SK-N-SH (cell line): ENCODE measurements at regions of chr1 and their contacts with region 1.

Region 1: DNA sequence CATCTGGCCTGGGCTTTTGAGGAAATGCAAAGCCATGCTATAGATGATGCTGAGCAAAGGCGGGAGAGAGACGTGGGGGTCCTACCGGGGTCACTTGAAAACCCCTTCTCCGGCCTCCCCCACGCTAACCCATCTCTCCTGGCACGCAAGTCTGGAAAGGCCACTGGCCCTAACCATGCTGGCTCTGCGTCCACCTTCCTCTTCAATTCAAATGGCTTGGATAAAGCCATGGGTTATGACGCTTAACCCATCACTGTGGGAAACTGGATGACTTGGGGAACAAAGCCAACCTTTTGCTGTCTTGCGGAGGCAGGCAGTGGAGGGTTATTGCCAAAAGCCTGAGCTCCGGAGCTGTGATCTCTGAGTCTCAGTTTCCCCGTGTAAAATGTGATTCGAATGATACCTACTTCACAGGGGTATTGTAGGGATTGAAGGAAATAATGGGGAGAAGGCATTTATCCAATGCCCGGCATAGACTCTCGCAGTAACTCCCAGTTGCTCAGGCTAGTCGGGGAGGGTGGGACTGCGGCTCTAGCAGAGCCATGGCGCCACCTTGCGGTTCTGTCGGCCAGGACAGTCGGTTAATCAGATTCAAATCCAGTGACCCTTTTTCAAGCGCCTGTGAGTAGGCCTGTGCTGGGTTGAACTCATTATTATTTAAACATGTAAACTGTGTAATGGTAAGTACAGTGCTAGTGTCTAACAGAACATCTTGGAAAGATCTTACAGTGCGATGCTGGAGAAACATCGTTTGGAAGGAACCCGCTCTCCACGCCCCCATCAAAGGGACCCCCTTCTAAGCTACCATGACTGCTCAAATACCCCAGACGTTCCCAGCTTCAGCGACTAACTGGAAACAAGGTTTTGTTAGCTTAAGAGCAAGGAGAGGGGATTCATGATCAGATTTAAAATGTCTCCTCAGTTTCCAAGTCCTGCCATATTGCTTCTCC is 20.3 kb downstream of the NEK2 start:
- DNase-seq: peak; percentile 83
- H3K4me3 ChIP-seq: no peak overlapping the region; a peak in 1 of 4 replicates
- H3K27ac ChIP-seq: no peak overlapping the region
- H3K4me1 ChIP-seq: peaks cover 0 to 4% of the 10 kb centered on the region in 2 experiments; a peak in 1 of 4 replicates
- H3K27me3 ChIP-seq: no peaks in the 10 kb centered on the region
- CTCF ChIP-seq: peak; percentile 98
- EP300 ChIP-seq: no peak
- RAD21 ChIP-seq: peak; percentile 98

Region 2: GRCh38 chr1:211578640-211579433 is 76.3 kb before region 1 on chr1 and contains the start of gene SLC30A1:
- CTCF ChIA-PET with region 1: interaction called, 31 read pairs
- POLR2A ChIA-PET with region 1: no interaction called
- DNase-seq: peak; percentile 100
- H3K4me3 ChIP-seq: peak within 1 kb of the TSS; percentile 89 to 98
- H3K27ac ChIP-seq: peak within 1 kb of the TSS; percentile 78 to 95
- H3K4me1 ChIP-seq: peaks cover 25 to 29% of the 10 kb centered on the region in 2 experiments; a peak in 3 of 4 replicates
- H3K27me3 ChIP-seq: no peaks in the 10 kb centered on the region
- CTCF ChIP-seq: no peak
- EP300 ChIP-seq: peak in 1 of 2 experiments; percentile 40; a peak in 2 of 4 replicates
- RAD21 ChIP-seq: no peak
- polyA plus RNA-seq, gene SLC30A1: 6.9 and 7.2 TPM in 2 replicates

Region 3: DNA sequence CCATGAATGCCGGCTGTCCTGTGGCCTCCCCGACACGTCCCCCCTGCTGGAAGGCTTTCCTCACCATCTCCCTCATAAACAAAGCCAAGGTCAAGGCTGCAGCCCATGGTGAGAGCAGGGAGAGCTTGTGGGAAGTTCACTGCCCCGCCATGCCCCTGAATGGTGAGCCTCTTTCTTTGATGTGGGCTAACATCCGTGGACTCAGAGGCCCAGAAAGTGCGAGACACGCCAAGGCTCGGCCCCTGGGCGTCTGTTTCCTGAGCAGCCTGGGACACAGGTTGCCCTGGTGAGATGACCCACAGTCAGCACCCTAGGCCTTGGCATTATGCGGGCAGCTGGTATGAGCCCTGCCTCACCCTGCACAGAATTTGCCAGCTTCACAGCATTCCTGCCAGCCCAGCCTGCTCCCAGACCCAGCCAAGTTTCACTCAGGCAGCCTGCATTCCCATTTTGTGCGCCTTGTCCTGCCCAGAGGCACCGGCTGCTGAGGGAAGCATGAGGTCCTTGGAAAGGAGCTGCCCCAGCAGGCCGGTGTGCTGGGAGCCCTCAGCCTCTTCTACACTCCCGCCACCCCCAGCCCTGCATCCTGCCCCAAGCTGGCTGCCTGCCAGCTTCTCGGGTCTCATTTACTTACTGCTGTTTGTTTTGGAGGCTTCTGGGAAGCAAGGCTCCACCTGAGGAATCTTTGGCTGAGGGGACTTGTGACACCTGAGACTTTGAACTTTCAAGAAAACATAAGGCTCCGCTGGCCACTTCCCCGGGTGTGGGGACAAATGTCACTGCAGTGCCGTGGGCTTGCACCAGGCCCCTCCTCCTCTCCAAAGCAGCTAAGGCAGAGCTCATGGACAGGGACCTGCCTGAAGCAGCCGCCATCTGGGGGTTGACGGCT is 11.5 kb before region 1 on chr1:
- CTCF ChIA-PET with region 1: interaction called, 34 read pairs
- POLR2A ChIA-PET with region 1: no interaction called
- DNase-seq: peak; percentile 78
- H3K4me3 ChIP-seq: no peak overlapping the region
- H3K27ac ChIP-seq: peak overlapping the region; percentile 36 to 47; a peak in 3 of 4 replicates
- H3K4me1 ChIP-seq: peaks cover 13 to 19% of the 10 kb centered on the region in 2 experiments; a peak in 3 of 4 replicates
- H3K27me3 ChIP-seq: no peaks in the 10 kb centered on the region
- CTCF ChIP-seq: no peak
- EP300 ChIP-seq: no peak
- RAD21 ChIP-seq: no peak

Region 4: DNA sequence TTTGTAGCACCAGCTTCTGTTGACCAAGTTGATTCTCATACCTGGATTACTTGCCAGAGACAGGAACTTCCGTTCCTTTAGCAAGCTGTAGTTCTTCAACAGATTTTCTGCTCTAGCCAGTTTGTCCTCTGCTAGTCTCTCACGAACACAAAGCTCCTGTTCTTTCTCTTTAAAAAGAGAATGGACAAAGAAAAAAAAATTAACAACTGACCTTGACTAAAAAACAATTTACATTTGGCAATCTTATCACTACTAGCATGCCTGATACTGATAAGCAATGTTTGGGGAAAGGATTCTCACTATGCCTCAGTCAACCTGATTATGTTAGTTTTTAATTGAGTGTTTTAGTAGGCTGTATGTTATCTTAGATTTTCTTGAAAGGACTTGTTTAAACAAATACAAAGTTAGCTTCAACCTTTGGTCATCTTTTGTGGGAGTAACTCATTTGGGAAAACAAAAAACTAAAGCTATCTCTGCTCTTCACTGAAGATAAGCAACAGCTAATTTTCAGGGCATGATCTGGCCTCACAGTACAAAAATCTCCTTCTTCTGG is 12.0 kb after region 1 on chr1:
- CTCF ChIA-PET with region 1: interaction called, 13 read pairs
- POLR2A ChIA-PET with region 1: no interaction called
- DNase-seq: no peak
- H3K4me3 ChIP-seq: no peak overlapping the region
- H3K27ac ChIP-seq: no peak overlapping the region
- H3K4me1 ChIP-seq: no peaks in the 10 kb centered on the region; a peak in 1 of 4 replicates
- H3K27me3 ChIP-seq: no peaks in the 10 kb centered on the region
- CTCF ChIP-seq: no peak
- EP300 ChIP-seq: no peak
- RAD21 ChIP-seq: no peak

Region 5: GRCh38 chr1:211813590-211813989 is 158.5 kb after region 1 on chr1:
- CTCF ChIA-PET with region 1: no interaction called
- POLR2A ChIA-PET with region 1: no interaction called
- DNase-seq: no peak
- H3K4me3 ChIP-seq: no peak overlapping the region
- H3K27ac ChIP-seq: no peak overlapping the region
- H3K4me1 ChIP-seq: no peaks in the 10 kb centered on the region
- H3K27me3 ChIP-seq: no peaks in the 10 kb centered on the region
- CTCF ChIP-seq: no peak
- EP300 ChIP-seq: no peak
- RAD21 ChIP-seq: no peak

Region 6: DNA sequence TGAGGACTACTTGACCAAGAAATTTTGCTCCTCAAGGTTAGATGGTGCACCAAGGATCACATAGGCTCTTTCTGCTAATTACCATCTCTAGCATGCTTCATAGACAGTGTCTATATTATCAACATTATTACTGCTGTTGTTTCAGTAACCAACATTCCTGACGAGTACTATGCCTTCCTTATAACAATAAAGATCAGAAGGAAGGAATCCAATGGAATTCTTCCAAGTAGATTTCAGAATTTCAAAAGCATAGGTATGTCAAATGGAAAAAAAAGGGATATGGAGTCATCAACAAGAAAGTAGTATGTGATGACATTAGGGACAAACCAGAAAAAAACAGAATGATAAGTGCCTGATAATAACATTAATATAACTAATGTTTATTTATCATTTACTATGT is 215.0 kb after region 1 on chr1:
- CTCF ChIA-PET with region 1: no interaction called
- POLR2A ChIA-PET with region 1: no interaction called
- DNase-seq: no peak
- H3K4me3 ChIP-seq: no peak overlapping the region
- H3K27ac ChIP-seq: no peak overlapping the region
- H3K4me1 ChIP-seq: no peaks in the 10 kb centered on the region
- H3K27me3 ChIP-seq: no peaks in the 10 kb centered on the region
- CTCF ChIP-seq: no peak
- EP300 ChIP-seq: no peak
- RAD21 ChIP-seq: no peak